PC-3 (cell line): ENCODE measurements at regions of chr6 and their contacts with region 1.

Region 1: DNA sequence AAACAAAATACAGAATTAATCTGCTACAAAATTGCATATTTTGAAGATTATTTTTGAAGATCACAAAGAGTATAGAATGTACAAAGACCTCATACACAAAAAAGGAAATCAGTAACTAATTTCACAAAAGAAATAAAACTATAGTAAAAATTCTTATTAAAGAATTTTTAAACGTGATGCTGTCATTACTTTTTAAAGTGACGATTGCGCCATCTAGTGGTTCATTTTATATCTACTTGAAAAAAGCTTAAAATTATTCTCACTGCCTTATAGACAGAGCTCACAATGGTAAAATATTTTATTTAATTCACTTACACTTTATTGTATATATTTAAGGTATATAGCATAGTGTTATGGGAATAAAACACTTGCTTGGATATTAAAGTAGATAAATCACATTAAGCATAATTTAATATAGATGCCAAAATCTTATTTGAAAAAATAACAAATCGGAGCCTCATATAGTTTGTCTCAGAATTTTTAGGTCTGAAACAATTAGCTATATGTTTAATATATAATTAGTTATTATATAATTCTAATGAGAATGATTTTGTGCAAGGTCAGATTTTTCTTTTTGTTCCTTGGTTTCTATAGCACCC is 128.8 kb downstream of the PHF3 start:
- DNase-seq: peak; percentile 74
- ATAC-seq: no peak
- H3K4me3 ChIP-seq: no peak overlapping the region
- H3K27ac ChIP-seq: no peak overlapping the region
- H3K4me1 ChIP-seq: no peaks in the 10 kb centered on the region; the same call in 1 of the 2 replicates
- H3K27me3 ChIP-seq: no peaks in the 10 kb centered on the region
- CTCF ChIP-seq: peak; percentile 53

Region 2: DNA sequence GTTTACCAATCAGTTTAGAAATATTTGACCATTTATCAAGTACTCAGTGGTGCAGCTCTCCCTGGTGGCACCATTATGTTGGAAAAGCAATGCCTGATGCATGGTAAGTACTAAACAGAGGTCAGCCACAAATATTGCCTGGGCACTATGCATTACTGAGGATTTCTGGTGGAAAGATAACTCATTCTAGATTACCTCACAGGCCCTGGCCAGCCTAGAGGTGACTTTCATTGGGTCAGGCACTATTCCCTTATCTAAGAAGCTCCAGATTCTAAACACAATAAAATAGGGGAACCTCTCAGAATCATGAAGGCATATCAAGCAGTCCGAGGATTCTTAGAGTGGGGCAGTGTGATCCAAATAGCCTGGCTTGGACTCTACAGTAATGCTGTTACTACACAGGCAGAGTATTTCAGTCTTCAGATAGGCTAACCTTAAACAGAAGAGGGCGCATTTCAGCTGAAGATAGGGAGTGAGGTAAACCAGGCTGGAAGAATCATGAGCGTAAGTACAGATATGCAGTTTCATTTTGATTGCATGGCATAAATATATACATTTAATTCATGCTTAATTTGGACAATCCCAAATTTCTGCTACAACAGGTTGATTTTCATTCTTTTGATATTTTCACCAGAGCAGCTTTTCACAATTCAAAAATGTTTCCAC is 456.7 kb before region 1 on chr6:
- CTCF ChIA-PET with region 1: no interaction called
- POLR2A ChIA-PET with region 1: no interaction called
- intact Hi-C with region 1: loop called (anchors 2 kb)
- DNase-seq: peak; percentile 72
- ATAC-seq: peak; percentile 96
- H3K4me3 ChIP-seq: peak overlapping the region; percentile 47
- H3K27ac ChIP-seq: no peak overlapping the region
- H3K4me1 ChIP-seq: no peaks in the 10 kb centered on the region
- H3K27me3 ChIP-seq: no peaks in the 10 kb centered on the region
- CTCF ChIP-seq: peak; percentile 70

Region 3: DNA sequence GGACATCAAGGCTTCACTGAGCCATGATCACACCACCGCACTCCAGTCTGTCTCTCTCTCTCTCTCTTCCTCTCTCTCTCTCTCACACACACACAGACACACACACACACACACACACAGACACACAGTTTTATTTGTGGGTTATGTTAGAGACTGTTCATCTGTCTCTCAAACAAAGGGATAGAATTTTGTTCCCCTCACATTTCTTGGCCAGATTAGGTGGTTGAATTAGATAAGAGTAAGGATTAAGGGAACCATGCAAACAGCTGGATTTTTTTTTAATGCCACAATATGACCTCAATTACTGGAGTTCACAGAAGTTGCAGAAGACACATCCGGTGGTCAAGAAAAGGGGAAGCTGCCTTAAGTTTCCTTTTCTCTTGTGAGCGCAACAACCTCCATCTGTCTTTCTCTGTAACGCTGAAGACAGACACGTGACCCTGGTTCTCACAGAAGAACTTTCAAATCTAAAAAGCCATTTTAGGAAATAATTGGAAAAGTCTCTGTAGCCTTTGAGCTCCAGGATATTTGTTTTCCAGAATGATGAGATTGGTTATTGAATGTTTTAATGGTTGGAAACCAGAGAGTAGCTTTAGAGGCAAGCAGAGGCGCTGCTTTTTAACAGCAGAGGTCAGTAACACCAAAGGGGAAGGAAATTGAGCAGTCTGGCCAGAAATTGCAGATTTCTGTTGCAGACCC is 411.7 kb before region 1 on chr6:
- CTCF ChIA-PET with region 1: interaction called, 10 read pairs
- POLR2A ChIA-PET with region 1: no interaction called
- intact Hi-C with region 1: loop called (anchors 1 kb)
- DNase-seq: peak; percentile 57
- ATAC-seq: peak; percentile 85
- H3K4me3 ChIP-seq: no peak overlapping the region
- H3K27ac ChIP-seq: no peak overlapping the region
- H3K4me1 ChIP-seq: peaks cover 23% of the 10 kb centered on the region
- H3K27me3 ChIP-seq: no peaks in the 10 kb centered on the region
- CTCF ChIP-seq: peak; percentile 69

Region 4: DNA sequence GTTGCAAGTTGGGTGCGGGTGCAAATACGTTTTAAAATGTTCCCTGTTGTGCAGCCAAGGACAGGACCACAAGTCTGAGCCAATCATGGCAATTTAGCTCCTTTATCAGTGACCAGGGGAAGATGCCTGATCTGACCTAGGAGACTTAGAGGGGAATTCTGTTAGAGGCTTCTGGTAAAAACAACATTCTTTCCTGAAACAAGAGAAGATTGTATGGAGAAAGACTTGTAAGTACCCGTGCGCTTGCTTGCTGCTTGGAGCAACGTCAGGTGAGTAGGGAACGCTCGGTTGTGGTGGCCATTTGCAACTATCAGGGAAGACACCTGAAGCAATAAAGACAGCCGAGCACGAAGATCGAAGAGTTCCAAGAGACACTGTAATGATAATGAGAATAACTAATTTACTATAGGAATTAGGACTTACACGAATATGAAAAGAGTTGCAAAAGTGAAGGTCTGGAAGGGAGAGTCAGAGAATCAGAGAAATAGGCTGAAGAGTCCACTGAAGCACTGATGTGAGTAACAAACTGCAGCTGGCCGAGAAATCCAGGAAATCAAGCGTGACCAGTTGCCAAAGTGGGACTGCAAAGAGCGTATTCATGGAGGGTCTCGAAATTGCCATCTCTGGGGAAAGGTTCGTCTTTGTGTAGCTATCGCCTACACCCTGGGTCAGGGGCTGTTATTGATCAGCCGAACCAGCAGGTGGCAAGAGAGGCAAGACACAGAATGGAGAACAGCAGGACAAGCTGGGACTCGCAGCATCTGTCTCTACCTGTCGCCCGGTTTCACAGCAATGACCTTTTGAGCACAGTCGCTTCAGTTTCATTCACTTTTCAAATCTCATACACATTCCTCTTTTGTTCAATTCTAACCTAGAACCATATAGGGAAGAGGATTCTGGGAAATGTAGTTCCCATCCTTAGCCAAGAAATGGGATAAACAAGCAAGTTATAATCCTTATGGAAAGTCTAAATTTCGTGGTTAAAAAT is 166.1 kb before region 1 on chr6:
- CTCF ChIA-PET with region 1: interaction called, 12 read pairs
- POLR2A ChIA-PET with region 1: no interaction called
- intact Hi-C with region 1: loop called (anchors 2 kb)
- DNase-seq: peak; percentile 65
- ATAC-seq: peak; percentile 95
- H3K4me3 ChIP-seq: peak overlapping the region; percentile 87
- H3K27ac ChIP-seq: no peak overlapping the region
- H3K4me1 ChIP-seq: peaks cover 6% of the 10 kb centered on the region; the same call in 1 of the 2 replicates
- H3K27me3 ChIP-seq: no peaks in the 10 kb centered on the region
- CTCF ChIP-seq: peak; percentile 80

Region 5: GRCh38 chr6:63685446-63686379 is 78.7 kb before region 1 on chr6:
- CTCF ChIA-PET with region 1: no interaction called
- POLR2A ChIA-PET with region 1: interaction called, 5 read pairs
- intact Hi-C with region 1: loop called (anchors 5 kb)
- DNase-seq: no peak
- ATAC-seq: no peak
- H3K4me3 ChIP-seq: no peak overlapping the region
- H3K27ac ChIP-seq: no peak overlapping the region
- H3K4me1 ChIP-seq: no peaks in the 10 kb centered on the region
- H3K27me3 ChIP-seq: no peaks in the 10 kb centered on the region
- CTCF ChIP-seq: no peak